ENCODE measurements at regions of chr1 and their contacts with region 1.

Region 1: DNA sequence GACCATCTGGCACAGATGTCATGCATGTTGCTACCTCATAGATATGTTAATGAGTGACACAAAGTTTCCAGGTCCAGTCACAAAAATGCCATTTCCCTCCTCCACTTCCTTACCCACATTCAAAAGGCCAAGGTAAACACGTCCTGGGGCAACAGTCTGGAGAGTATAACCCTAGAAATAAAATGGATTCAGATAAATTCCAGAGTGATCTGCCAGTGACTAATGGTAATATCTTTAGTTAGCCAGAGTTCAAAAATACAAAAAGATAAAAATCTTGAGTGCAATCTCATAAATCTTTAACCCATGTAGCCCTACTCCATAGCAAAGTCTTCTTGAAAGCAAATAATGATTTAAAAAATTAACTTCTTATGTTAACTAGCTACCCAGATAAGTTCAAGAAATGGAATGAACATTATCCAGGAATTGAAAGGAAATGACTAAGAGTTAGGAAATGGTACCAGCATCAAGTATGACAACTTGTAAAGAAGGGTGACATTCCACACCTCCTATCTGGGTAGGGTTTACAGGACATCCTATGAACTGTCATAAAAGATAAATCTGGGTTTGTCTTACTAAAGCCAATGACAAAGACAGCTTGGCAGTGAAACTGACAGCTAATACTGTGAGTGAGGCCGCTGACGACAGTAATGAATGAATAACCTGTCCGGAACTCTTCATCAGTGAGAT is 18.1 kb downstream of the RGS2 start:
- DNase-seq: peak in 1 of 14 experiments; percentile 16
- ATAC-seq: no peak
- H3K4me3 ChIP-seq: no peak overlapping the region
- H3K4me3 Mint-ChIP-seq: no peak overlapping the region
- H3K27ac ChIP-seq: no peak overlapping the region
- H3K27ac Mint-ChIP-seq: no peak overlapping the region
- H3K4me1 ChIP-seq: no peaks in the 10 kb centered on the region
- H3K4me1 Mint-ChIP-seq: no peaks in the 10 kb centered on the region
- H3K27me3 ChIP-seq: peaks cover 0 to 7% of the 10 kb centered on the region in 2 experiments
- H3K27me3 Mint-ChIP-seq: peaks cover 34% of the 10 kb centered on the region
- CTCF ChIP-seq: no peak

Region 2: DNA sequence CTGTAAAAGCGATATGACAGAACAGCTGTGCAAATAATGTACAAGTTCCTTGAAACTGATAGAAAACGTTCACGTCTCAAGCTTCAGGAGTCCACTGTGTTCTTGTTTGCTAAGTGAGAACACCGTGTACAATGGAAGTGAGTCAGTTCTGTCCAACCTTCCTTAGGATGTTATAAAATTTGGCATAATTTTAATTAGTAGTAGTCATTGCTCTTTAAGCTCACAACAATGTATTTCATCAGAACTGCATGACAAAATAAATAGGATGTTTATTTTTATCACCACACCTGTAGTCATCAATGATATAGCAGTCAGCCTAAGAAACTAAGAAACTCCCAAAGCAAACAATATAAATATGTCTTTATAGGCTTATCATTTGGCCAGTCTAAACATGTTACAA is 34.9 kb after region 1 on chr1:
- CTCF ChIA-PET with region 1: no interaction called
- POLR2A ChIA-PET with region 1: no interaction called
- intact Hi-C with region 1: loop called in 1 of 2 experiments (anchors 1 kb)
- DNase-seq: no peak
- ATAC-seq: no peak
- H3K4me3 ChIP-seq: no peak overlapping the region
- H3K4me3 Mint-ChIP-seq: no peak overlapping the region
- H3K27ac ChIP-seq: no peak overlapping the region
- H3K27ac Mint-ChIP-seq: no peak overlapping the region
- H3K4me1 ChIP-seq: no peaks in the 10 kb centered on the region
- H3K4me1 Mint-ChIP-seq: no peaks in the 10 kb centered on the region
- H3K27me3 ChIP-seq: no peaks in the 10 kb centered on the region
- H3K27me3 Mint-ChIP-seq: no peaks in the 10 kb centered on the region
- CTCF ChIP-seq: no peak